Psoas muscle (tissue), 8 donors: ENCODE measurements at regions of chr2 and their contacts with region 1.

Region 1: DNA sequence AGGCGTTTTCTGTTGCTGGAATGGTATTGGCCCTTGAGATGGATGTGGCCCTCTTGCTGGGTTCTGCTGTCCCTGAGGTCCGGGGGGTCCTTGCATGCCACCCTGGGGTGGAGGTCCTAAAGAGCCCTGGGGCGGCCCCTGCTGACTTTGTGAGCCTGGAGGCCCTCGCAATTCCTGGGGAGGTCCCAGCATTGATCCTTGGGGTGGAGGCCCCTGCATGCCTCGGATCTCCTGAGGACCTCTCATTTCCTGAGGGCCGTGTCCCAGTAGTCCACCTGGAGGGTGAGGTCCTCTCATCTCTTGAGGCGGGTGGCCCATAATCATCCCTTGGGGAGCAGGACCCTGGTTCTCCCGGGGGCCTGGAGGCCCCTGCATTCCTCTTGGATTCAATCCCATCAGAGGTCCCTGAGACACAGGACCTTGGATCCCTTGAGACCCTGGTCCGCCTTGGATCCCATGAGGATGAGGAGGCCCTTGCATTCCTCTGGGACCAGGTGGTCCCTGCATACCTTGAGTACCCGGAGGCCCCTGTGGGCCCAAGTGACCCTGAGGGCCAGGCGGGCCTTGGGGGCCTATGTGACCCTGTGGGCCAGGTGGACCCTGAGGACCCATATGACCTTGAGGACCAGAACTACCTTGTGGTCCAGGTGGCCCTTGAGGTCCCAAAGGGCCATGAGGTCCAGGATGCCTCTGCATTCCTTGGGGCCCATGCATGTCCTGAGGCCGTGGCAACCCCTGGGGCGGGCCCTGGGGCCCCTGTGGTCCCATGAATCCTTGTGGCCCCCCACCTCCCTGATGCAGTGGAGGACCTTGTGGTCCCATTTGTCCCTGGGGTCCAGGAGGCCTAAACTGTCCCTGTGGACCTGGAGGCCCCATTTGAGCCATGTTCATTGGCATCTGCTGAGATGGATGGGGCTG is 18.3 kb downstream of the SFT2D3 start:
- DNase-seq: no peak
- ATAC-seq: peak in 1 of 4 donors; percentile 9
- H3K4me3 ChIP-seq: no peak overlapping the region
- H3K27ac ChIP-seq: no peak overlapping the region
- H3K4me1 ChIP-seq: peaks cover 30% of the 10 kb centered on the region
- H3K27me3 ChIP-seq: no peaks in the 10 kb centered on the region
- CTCF ChIP-seq: no peak

Region 2: GRCh38 chr2:127576433-127577207 is 142.9 kb before region 1 on chr2:
- intact Hi-C with region 1: no loop called
- DNase-seq: peak; percentile 87 to 96
- ATAC-seq: peak; percentile 93 to 95 (median 93)
- H3K4me3 ChIP-seq: peak overlapping the region; percentile 10
- H3K27ac ChIP-seq: peak overlapping the region; percentile 62
- H3K4me1 ChIP-seq: peaks cover 23% of the 10 kb centered on the region
- H3K27me3 ChIP-seq: no peaks in the 10 kb centered on the region
- CTCF ChIP-seq: no peak

Region 3: GRCh38 chr2:127735537-127736399 is 16.2 kb after region 1 on chr2:
- intact Hi-C with region 1: loop called in 1 of 2 experiments (anchors 1 kb)
- DNase-seq: no peak
- ATAC-seq: peak in 1 of 4 donors; percentile 46
- H3K4me3 ChIP-seq: no peak overlapping the region
- H3K27ac ChIP-seq: peak overlapping the region; percentile 59
- H3K4me1 ChIP-seq: peaks cover 19% of the 10 kb centered on the region
- H3K27me3 ChIP-seq: no peaks in the 10 kb centered on the region
- CTCF ChIP-seq: no peak